ENCODE measurements at regions of chr3 and their contacts with region 1.

Region 1: GRCh38 chr3:106413683-106414082 is 544.9 kb upstream of the CBLB start:
- DNase-seq: no peak
- H3K4me3 ChIP-seq: no peak overlapping the region
- H3K27ac ChIP-seq: no peak overlapping the region
- H3K4me1 ChIP-seq: no peaks in the 10 kb centered on the region
- H3K27me3 ChIP-seq: no peaks in the 10 kb centered on the region
- CTCF ChIP-seq: no peak

Region 2: DNA sequence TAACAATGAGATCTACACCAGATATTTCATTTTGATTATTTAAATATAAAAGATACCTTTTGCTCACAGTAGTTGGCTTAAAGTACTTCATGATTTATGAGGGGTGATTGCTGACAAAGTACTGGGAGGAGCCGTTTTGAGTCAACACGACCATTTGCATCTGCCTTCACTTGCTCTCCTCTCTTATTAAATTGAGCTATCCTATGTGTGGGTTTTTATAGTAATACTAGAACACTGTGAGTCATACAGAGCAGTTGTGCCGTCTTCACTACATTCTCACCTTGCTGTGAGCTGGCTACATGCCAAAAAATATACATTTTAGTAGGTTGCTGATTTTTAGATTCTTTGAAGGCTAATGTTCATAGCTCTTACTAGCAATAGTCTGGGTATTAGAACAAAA is 885.7 kb before region 1 on chr3:
- CTCF ChIA-PET with region 1: interaction called, 17 read pairs
- dilution Hi-C with region 1: no loop called
- in situ Hi-C with region 1: no loop called
- intact Hi-C with region 1: no loop called
- DNase-seq: peak; percentile 87
- H3K4me3 ChIP-seq: no peak overlapping the region
- H3K27ac ChIP-seq: peak overlapping the region; percentile 49
- H3K4me1 ChIP-seq: peaks cover 28% of the 10 kb centered on the region
- H3K27me3 ChIP-seq: no peaks in the 10 kb centered on the region
- CTCF ChIP-seq: no peak

Measured in mammary epithelial cell (primary cell).